ENCODE measurements at regions of chr19 and their contacts with region 1.

Region 1: GRCh38 chr19:7348587-7349230 is at the start of gene ARHGEF18:
- DNase-seq: peak; percentile 75
- H3K4me3 Mint-ChIP-seq: peak within 1 kb of the TSS; percentile 82
- H3K27ac Mint-ChIP-seq: peak within 1 kb of the TSS; percentile 96
- H3K4me1 Mint-ChIP-seq: peaks cover 59% of the 10 kb centered on the region
- H3K27me3 Mint-ChIP-seq: no peaks in the 10 kb centered on the region
- total RNA-seq, gene ARHGEF18: 24.6 to 28.7 TPM

Region 2: DNA sequence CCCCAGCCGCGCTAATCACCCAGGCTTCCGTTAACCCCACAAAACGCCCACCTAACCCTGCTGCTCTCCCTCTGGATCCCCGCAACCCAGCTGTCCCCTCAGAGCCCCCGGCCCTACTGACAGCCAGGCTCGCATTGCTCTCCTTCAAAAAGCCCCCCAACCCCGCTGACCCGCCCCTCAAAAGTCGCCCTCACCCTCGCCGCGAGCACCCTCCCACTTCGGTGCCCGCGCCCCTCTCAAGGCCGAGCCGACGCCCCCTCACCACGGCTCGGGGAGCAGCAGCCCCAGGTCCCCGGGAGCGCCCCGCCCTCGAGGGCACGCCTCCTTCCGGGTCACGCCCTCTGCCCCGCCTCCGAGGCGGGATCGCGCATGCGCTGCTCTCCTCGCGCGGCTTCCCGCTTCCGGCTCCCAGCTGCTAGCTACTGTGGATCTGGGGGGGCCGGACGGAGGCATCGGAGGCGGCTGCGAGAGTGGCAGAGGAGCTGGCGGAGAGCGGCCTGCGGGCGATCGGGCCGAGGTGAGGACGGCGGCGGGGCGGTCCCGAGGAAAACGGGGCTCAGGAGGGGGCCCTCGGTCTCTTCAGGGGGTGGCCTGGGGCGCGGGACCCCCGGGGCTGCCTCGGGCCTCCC is 46.1 kb after region 1 on chr19:
- CTCF ChIA-PET with region 1: interaction called, 3 read pairs
- intact Hi-C with region 1: loop called (anchors 5 kb)
- DNase-seq: peak; percentile 89
- H3K4me3 Mint-ChIP-seq: peak overlapping the region; percentile 90
- H3K27ac Mint-ChIP-seq: peak overlapping the region; percentile 69
- H3K4me1 Mint-ChIP-seq: peaks cover 30% of the 10 kb centered on the region
- H3K27me3 Mint-ChIP-seq: no peaks in the 10 kb centered on the region

Region 3: GRCh38 chr19:7674010-7675005 is 325.6 kb after region 1 on chr19:
- CTCF ChIA-PET with region 1: no interaction called
- intact Hi-C with region 1: loop called (anchors 5 kb)
- DNase-seq: peak; percentile 34
- H3K4me3 Mint-ChIP-seq: no peak overlapping the region
- H3K27ac Mint-ChIP-seq: no peak overlapping the region
- H3K4me1 Mint-ChIP-seq: peaks cover 44% of the 10 kb centered on the region
- H3K27me3 Mint-ChIP-seq: peaks cover 38% of the 10 kb centered on the region

Measured in activated naive CD4-positive, alpha-beta T cell treated with anti-CD3 and anti-CD28 coated beads for 36 hours (primary cell).